ENCODE measurements at regions of chr10 and their contacts with region 1.

Region 1: DNA sequence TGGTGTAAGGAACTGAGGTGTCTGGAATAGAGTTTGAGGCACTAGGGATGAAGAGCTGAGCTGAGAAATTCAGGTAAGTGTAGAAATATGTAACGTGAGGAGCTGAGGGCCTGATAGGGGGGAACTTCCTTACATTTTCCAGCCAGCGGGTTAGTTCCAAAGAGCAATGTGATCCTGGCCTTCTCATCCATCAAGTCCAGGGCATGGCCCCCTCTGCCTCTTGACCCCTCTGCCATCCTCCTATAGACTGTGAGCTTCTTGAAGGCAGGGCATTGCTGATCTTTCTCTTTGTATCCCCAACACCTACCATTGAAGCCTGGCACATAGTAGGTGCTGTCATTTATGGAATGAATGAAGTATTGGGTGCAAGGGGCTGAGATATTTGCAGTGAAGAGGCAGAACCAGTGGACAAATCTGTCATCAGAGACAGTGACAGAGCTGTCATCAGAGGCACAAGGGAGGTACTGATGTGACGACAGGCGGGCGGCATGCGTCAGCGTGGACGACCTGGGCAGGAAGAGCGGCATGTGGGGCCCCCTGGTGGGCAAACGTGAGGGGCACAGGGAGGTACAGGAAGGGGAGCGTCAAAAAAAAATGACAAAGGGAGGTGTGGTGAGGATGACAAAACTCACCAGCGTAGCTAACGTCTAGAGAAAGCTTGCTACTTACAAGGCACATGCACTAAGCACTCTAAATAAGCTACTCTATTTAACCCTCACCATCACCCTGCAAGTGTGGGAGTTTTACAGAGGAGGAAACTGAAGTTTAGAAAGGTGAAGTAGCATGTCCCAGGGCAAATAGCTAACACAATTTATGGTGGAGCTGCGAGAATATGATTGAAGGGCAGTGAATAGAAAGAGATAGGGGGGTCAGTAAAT is 5.2 kb upstream of the CAMK2G start:
- DNase-seq: peak; percentile 75
- ATAC-seq: peak; percentile 75
- H3K4me3 ChIP-seq: no peak overlapping the region
- H3K27ac ChIP-seq: no peak overlapping the region
- H3K4me1 ChIP-seq: peaks cover 2% of the 10 kb centered on the region; the same call in 1 of the 2 replicates
- H3K27me3 ChIP-seq: no peaks in the 10 kb centered on the region
- CTCF ChIP-seq: peak; percentile 91
- POLR2A ChIP-seq: no peak
- RAD21 ChIP-seq: peak; percentile 81

Region 2: DNA sequence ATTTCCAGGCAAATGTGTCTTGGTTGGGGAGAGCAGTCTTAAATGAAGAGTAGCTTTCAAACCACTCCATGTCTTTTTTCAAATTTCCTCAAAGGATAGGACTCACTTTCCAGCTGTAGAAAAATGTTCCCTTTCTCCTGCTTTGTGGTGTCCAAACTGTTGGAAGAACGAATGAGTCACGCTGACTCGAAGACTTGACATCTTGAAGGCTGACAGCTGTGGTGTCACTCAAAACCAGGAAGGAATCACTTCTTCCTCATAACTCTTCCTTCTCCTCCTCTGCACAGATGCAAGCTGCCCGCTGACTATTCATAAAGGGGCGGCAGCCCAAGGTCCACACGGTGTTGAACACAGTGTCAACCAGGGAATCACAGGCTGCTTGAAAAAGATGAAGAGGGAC is 944.2 kb before region 1 on chr10:
- CTCF ChIA-PET with region 1: no interaction called
- POLR2A ChIA-PET with region 1: no interaction called
- dilution Hi-C with region 1: no loop called
- in situ Hi-C with region 1: no loop called
- intact Hi-C with region 1: no loop called
- DNase-seq: peak; percentile 44
- ATAC-seq: no peak
- H3K4me3 ChIP-seq: no peak overlapping the region
- H3K27ac ChIP-seq: no peak overlapping the region
- H3K4me1 ChIP-seq: no peaks in the 10 kb centered on the region
- H3K27me3 ChIP-seq: peaks cover 2% of the 10 kb centered on the region; the same call in 1 of the 2 replicates
- CTCF ChIP-seq: no peak
- POLR2A ChIP-seq: no peak
- RAD21 ChIP-seq: no peak

Region 3: GRCh38 chr10:73848821-73849489 is 30.6 kb before region 1 on chr10:
- CTCF ChIA-PET with region 1: interaction called, 7 read pairs
- POLR2A ChIA-PET with region 1: no interaction called
- dilution Hi-C with region 1: no loop called
- in situ Hi-C with region 1: no loop called
- intact Hi-C with region 1: loop called (anchors 1 kb)
- DNase-seq: peak; percentile 78
- ATAC-seq: peak; percentile 98
- H3K4me3 ChIP-seq: no peak overlapping the region
- H3K27ac ChIP-seq: no peak overlapping the region
- H3K4me1 ChIP-seq: peaks cover 4% of the 10 kb centered on the region; the same call in 1 of the 2 replicates
- H3K27me3 ChIP-seq: no peaks in the 10 kb centered on the region
- CTCF ChIP-seq: peak; percentile 94
- POLR2A ChIP-seq: no peak
- RAD21 ChIP-seq: peak; percentile 92

Region 4: GRCh38 chr10:73894245-73894971 is 14.9 kb after region 1 on chr10:
- CTCF ChIA-PET with region 1: interaction called, 11 read pairs
- POLR2A ChIA-PET with region 1: no interaction called
- dilution Hi-C with region 1: no loop called
- in situ Hi-C with region 1: no loop called
- intact Hi-C with region 1: no loop called
- DNase-seq: peak; percentile 85
- ATAC-seq: peak; percentile 21; the same call in 1 of the 2 replicates
- H3K4me3 ChIP-seq: no peak overlapping the region
- H3K27ac ChIP-seq: no peak overlapping the region
- H3K4me1 ChIP-seq: peaks cover 27% of the 10 kb centered on the region
- H3K27me3 ChIP-seq: no peaks in the 10 kb centered on the region
- CTCF ChIP-seq: no peak
- POLR2A ChIP-seq: no peak
- RAD21 ChIP-seq: no peak

Region 5: GRCh38 chr10:73940634-73941221 is 61.2 kb after region 1 on chr10:
- CTCF ChIA-PET with region 1: interaction called, 32 read pairs
- POLR2A ChIA-PET with region 1: no interaction called
- dilution Hi-C with region 1: no loop called
- in situ Hi-C with region 1: no loop called
- intact Hi-C with region 1: no loop called
- DNase-seq: peak; percentile 49
- ATAC-seq: peak; percentile 97
- H3K4me3 ChIP-seq: no peak overlapping the region
- H3K27ac ChIP-seq: peak overlapping the region; percentile 54
- H3K4me1 ChIP-seq: peaks cover 13% of the 10 kb centered on the region
- H3K27me3 ChIP-seq: no peaks in the 10 kb centered on the region
- CTCF ChIP-seq: peak; percentile 84
- POLR2A ChIP-seq: no peak
- RAD21 ChIP-seq: peak; percentile 92